H1 (cell line): ENCODE measurements at regions of chr1 and their contacts with region 1.

Region 1: GRCh38 chr1:157505481-157506272 is 46.6 kb downstream of the FCRL5 start:
- DNase-seq: peak; percentile 34 to 64
- H3K4me3 ChIP-seq: no peak overlapping the region
- H3K27ac ChIP-seq: no peak overlapping the region
- H3K4me1 ChIP-seq: no peaks in the 10 kb centered on the region
- H3K27me3 ChIP-seq: no peaks in the 10 kb centered on the region
- CTCF ChIP-seq: peak; percentile 68 to 91 (median 88)
- EP300 ChIP-seq: no peak
- POLR2A ChIP-seq: no peak
- RAD21 ChIP-seq: peak; percentile 79 to 86

Region 2: GRCh38 chr1:157363660-157364140 is 142.0 kb before region 1 on chr1:
- CTCF ChIA-PET with region 1: interaction called, 12 read pairs
- POLR2A ChIA-PET with region 1: no interaction called
- DNase-seq: peak; percentile 33 to 57
- H3K4me3 ChIP-seq: no peak overlapping the region
- H3K27ac ChIP-seq: no peak overlapping the region
- H3K4me1 ChIP-seq: 0 out of 7 replicates have a peak, but pooled peaks cover 0 to 4% (median 0%) of the 10 kb centered on the region in 4 experiments
- H3K27me3 ChIP-seq: no peaks in the 10 kb centered on the region
- CTCF ChIP-seq: peak; percentile 67 to 85 (median 68)
- EP300 ChIP-seq: no peak
- POLR2A ChIP-seq: no peak
- RAD21 ChIP-seq: peak; percentile 72 to 81

Region 3: DNA sequence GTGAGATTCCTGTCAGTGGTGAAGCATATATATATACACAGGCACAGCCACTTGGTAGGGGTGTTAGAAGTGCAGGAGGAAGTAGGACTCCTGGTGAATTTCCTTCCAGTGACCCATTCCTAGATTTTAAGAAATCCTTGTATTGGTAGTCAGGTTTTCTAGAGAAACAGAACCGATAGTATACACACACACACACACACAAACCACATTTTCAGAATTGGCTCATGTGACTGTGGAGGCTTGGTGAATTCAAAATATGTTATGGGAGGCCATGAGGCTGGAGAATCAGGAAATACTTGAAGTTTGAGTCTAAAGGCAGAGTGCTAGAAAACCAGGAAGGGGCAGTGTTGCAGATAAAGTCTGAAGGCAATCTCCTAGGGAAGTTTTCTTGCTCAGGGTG is 67.5 kb before region 1 on chr1:
- CTCF ChIA-PET with region 1: no interaction called
- POLR2A ChIA-PET with region 1: no interaction called
- DNase-seq: no peak
- H3K4me3 ChIP-seq: no peak overlapping the region
- H3K27ac ChIP-seq: no peak overlapping the region
- H3K4me1 ChIP-seq: peaks cover 0 to 4% (median 2%) of the 10 kb centered on the region in 4 experiments; a peak in 3 of 7 replicates
- H3K27me3 ChIP-seq: no peaks in the 10 kb centered on the region
- CTCF ChIP-seq: no peak
- EP300 ChIP-seq: no peak
- POLR2A ChIP-seq: no peak
- RAD21 ChIP-seq: no peak

Region 4: GRCh38 chr1:157490467-157491165 is 15.1 kb before region 1 on chr1:
- CTCF ChIA-PET with region 1: interaction called, 33 read pairs
- POLR2A ChIA-PET with region 1: no interaction called
- DNase-seq: peak; percentile 43 to 95
- H3K4me3 ChIP-seq: no peak overlapping the region; a peak in 1 of 8 replicates
- H3K27ac ChIP-seq: no peak overlapping the region
- H3K4me1 ChIP-seq: peaks cover 0 to 3% (median 0%) of the 10 kb centered on the region in 4 experiments; a peak in 1 of 7 replicates
- H3K27me3 ChIP-seq: no peaks in the 10 kb centered on the region; a peak in 2 of 7 replicates
- CTCF ChIP-seq: peak; percentile 56 to 89 (median 68)
- EP300 ChIP-seq: no peak
- POLR2A ChIP-seq: no peak
- RAD21 ChIP-seq: peak; percentile 76 to 80

Region 5: DNA sequence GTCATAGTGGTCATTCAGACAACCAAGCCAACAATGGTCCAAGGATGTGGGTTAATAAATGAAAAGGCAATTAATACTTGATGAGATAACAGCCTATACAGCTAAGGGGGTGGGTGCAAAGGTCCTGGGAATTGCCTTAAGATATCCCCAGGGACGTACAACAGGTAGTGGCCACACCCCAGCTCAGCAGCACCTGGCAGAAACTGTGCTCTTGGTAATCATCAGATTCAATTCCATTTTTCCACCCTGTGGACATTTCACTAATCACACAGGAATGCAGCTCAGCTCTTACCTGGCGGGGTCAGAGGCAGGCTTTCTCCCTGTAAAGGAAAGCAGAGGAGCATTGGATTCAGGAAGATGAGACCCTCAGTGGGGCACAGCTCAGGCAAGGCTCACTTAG is 13.8 kb after region 1 on chr1:
- CTCF ChIA-PET with region 1: interaction called, 21 read pairs
- POLR2A ChIA-PET with region 1: no interaction called
- DNase-seq: no peak
- H3K4me3 ChIP-seq: no peak overlapping the region
- H3K27ac ChIP-seq: no peak overlapping the region
- H3K4me1 ChIP-seq: no peaks in the 10 kb centered on the region
- H3K27me3 ChIP-seq: no peaks in the 10 kb centered on the region
- CTCF ChIP-seq: no peak
- EP300 ChIP-seq: no peak
- POLR2A ChIP-seq: no peak
- RAD21 ChIP-seq: no peak